Astrocyte of the cerebellum (primary cell): ENCODE measurements at regions of chr10 and their contacts with region 1.

Region 1: DNA sequence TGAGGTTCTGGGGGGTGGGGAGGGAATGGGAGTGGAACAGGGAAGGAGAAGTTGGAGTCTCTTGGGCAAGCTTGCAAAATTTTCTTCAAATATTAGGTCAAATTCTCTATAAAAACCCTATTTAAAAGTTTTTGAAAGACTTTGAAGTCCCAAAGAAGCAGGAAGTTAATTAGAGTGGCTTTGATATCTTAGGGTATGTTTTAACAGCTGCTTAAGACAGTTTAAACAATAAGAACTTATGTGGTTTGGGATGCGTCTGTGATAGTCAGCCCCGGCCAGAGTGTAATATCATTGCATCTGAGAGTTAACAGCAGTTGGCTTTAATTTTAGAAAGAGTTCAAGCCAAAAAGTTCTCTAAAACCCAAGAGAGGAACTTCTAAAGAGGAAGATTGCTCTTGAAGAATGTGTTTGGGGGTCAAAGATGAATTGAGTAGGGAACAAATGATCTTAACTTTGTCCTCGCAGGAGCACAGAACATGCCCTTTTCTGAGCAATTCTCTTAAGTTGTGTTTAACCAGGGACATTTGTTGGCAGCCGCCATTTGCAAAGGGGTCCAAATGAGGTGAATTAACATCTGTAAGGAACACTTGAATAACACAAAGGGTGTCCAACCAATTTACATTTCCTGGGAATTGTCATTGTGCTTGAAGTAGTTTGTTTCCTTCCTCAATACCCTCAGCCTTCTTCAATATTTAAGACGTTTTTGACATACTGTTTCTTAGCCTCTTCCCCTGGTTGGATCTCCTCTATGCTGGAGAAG is 182.4 kb downstream of the PTEN start:
- DNase-seq: no peak
- H3K4me3 ChIP-seq: no peak overlapping the region
- CTCF ChIP-seq: no peak

Region 2: GRCh38 chr10:87519582-87519981 is 526.3 kb before region 1 on chr10:
- in situ Hi-C with region 1: no loop called
- DNase-seq: no peak
- H3K4me3 ChIP-seq: no peak overlapping the region
- CTCF ChIP-seq: no peak

Region 3: GRCh38 chr10:87973635-87974034 is 72.2 kb before region 1 on chr10:
- in situ Hi-C with region 1: loop called (anchors 5 kb)
- DNase-seq: peak; percentile 8
- H3K4me3 ChIP-seq: no peak overlapping the region
- CTCF ChIP-seq: no peak

Region 4: DNA sequence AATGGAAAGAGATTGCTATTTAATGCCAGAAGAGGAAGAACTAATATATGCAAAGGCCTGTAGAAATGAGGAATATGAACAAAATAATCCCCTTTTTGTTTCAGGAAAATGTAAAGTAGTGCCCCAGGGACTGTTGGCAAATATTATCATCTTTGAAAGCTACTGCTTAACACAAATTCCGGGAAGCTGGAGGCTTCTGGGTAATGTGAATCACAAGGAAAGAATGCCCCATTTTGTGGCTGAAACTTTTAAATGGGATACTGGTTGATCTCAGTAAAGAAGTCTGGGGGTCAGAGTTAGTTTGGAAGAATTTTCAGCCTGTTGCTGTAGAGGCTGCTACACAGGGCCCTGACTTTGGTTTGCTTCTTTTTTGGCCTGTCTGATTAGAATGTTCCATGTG is 41.4 kb before region 1 on chr10:
- in situ Hi-C with region 1: no loop called
- DNase-seq: no peak
- H3K4me3 ChIP-seq: no peak overlapping the region
- CTCF ChIP-seq: no peak

Region 5: GRCh38 chr10:88095223-88095721 is 49.4 kb after region 1 on chr10:
- in situ Hi-C with region 1: loop called (anchors 5 kb)
- DNase-seq: no peak
- H3K4me3 ChIP-seq: no peak overlapping the region
- CTCF ChIP-seq: no peak